ENCODE measurements at regions of chr15 and their contacts with region 1.

Region 1: GRCh38 chr15:60899322-60899966 is 329.7 kb downstream of the RORA start:
- DNase-seq: peak; percentile 76
- ATAC-seq: peak; percentile 79
- H3K4me3 ChIP-seq: no peak overlapping the region
- H3K27ac ChIP-seq: peak overlapping the region; percentile 60; the same call in 1 of the 2 replicates
- H3K4me1 ChIP-seq: peaks cover 45% of the 10 kb centered on the region
- H3K27me3 ChIP-seq: no peaks in the 10 kb centered on the region
- CTCF ChIP-seq: no peak
- EP300 ChIP-seq: peak; percentile 76 to 87; a peak in 3 of 4 replicates
- POLR2A ChIP-seq: no peak
- RAD21 ChIP-seq: no peak

Region 2: DNA sequence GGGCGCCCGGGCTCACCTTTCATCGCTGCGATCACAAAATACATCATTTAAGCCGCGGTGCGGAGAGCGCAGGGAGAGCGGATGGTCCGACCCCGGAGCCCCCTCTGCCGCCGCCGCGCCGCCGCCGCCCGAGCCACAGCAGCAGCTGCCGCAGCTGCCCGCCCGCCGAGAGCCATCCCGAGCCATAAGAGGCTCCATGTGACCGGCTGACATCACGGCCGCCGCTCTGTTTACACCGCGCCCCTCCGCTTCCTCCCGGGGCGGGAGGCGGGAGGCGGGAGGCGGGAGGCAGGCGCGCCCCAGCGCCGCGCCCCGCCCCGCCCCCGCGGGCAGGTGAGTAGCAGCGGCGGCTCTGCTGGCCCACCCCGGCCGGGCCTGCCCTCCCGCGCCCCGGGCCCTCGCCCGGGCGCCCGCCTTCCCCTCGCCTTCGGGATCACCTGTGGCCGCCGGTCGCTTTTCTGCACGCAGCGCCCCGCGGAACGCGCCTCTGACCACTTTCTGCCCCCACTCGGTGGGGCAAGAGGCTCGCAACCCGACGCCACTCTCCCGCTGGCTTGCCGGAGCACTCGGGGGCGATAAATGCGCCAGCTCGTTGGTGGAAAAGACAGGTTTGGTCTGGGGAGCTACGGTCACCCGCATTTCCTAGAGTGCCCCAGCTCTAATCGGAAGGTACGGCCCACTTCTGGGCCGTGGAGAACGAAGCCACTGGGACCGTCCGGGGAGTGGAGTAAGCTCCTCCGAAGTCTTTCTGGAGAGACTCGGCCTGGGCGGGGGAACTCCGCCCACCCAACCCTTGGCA is 306.9 kb before region 1 on chr15:
- CTCF ChIA-PET with region 1: interaction called, 82 read pairs
- POLR2A ChIA-PET with region 1: interaction called, 4 read pairs
- RAD21 ChIA-PET with region 1: interaction called, 6 read pairs
- SMC1A ChIA-PET with region 1: interaction called, 12 read pairs
- in situ Hi-C with region 1: no loop called
- intact Hi-C with region 1: loop called (anchors 5 kb)
- DNase-seq: no peak
- ATAC-seq: peak; percentile 74
- H3K4me3 ChIP-seq: peak overlapping the region; percentile 83
- H3K27ac ChIP-seq: no peak overlapping the region
- H3K4me1 ChIP-seq: no peaks in the 10 kb centered on the region
- H3K27me3 ChIP-seq: no peaks in the 10 kb centered on the region; a peak in 1 of 4 replicates
- CTCF ChIP-seq: peak; percentile 20 to 40 (median 35); a peak in 4 of 6 replicates
- EP300 ChIP-seq: no peak
- POLR2A ChIP-seq: peak; percentile 82
- RAD21 ChIP-seq: peak; percentile 19; the same call in 1 of the 2 replicates

Region 3: GRCh38 chr15:60649845-60650548 is 249.4 kb before region 1 on chr15:
- CTCF ChIA-PET with region 1: interaction called, 6 read pairs
- POLR2A ChIA-PET with region 1: no interaction called
- RAD21 ChIA-PET with region 1: interaction called, 4 read pairs
- SMC1A ChIA-PET with region 1: interaction called, 10 read pairs
- in situ Hi-C with region 1: no loop called
- intact Hi-C with region 1: loop called (anchors 2 kb)
- DNase-seq: peak; percentile 57
- ATAC-seq: peak; percentile 69
- H3K4me3 ChIP-seq: peak overlapping the region; percentile 55; the same call in 1 of the 2 replicates
- H3K27ac ChIP-seq: peak overlapping the region; percentile 84
- H3K4me1 ChIP-seq: peaks cover 42% of the 10 kb centered on the region
- H3K27me3 ChIP-seq: no peaks in the 10 kb centered on the region
- CTCF ChIP-seq: peak in 2 of 3 experiments; percentile 33 to 34; a peak in 4 of 6 replicates
- EP300 ChIP-seq: peak; percentile 77 to 89; a peak in 3 of 4 replicates
- POLR2A ChIP-seq: no peak
- RAD21 ChIP-seq: peak; percentile 77

Region 4: DNA sequence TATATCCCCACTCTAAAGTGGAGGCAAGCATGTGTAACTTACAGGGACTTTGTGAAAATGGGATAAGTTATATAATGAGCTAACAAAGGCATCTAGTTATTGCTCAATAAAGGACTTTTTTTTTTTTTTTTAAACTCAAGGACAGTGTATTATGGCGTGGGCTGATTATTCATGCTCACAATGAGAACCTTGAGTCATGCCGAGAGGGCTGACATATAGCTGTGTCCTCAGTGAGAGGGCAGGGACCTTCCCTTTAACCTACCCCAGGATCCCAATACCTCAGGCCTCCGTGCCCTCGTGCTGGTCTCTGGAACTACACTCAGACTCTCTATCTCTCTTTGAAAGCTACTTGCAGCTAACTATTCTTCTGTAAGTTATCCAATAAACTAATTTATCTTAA is 100.6 kb before region 1 on chr15:
- CTCF ChIA-PET with region 1: interaction called, 4 read pairs
- POLR2A ChIA-PET with region 1: interaction called, 6 read pairs
- RAD21 ChIA-PET with region 1: interaction called, 8 read pairs
- SMC1A ChIA-PET with region 1: interaction called, 6 read pairs
- in situ Hi-C with region 1: no loop called
- intact Hi-C with region 1: loop called (anchors 5 kb)
- DNase-seq: peak; percentile 19
- ATAC-seq: peak; percentile 76
- H3K4me3 ChIP-seq: no peak overlapping the region
- H3K27ac ChIP-seq: no peak overlapping the region
- H3K4me1 ChIP-seq: peaks cover 19% of the 10 kb centered on the region
- H3K27me3 ChIP-seq: no peaks in the 10 kb centered on the region
- CTCF ChIP-seq: no peak
- EP300 ChIP-seq: no peak
- POLR2A ChIP-seq: no peak
- RAD21 ChIP-seq: 0 out of 2 replicates have a peak, but pooled peaks have one; percentile 20

Region 5: GRCh38 chr15:60869851-60870250 is 29.6 kb before region 1 on chr15:
- CTCF ChIA-PET with region 1: interaction called, 4 read pairs
- POLR2A ChIA-PET with region 1: no interaction called
- RAD21 ChIA-PET with region 1: interaction called, 3 read pairs
- SMC1A ChIA-PET with region 1: interaction called, 10 read pairs
- in situ Hi-C with region 1: no loop called
- intact Hi-C with region 1: no loop called
- DNase-seq: no peak
- ATAC-seq: no peak
- H3K4me3 ChIP-seq: no peak overlapping the region
- H3K27ac ChIP-seq: no peak overlapping the region
- H3K4me1 ChIP-seq: no peaks in the 10 kb centered on the region
- H3K27me3 ChIP-seq: no peaks in the 10 kb centered on the region
- CTCF ChIP-seq: no peak
- EP300 ChIP-seq: no peak
- POLR2A ChIP-seq: no peak
- RAD21 ChIP-seq: no peak

Region 6: GRCh38 chr15:60973637-60974415 is 74.4 kb after region 1 on chr15:
- CTCF ChIA-PET with region 1: no interaction called
- POLR2A ChIA-PET with region 1: no interaction called
- RAD21 ChIA-PET with region 1: no interaction called
- SMC1A ChIA-PET with region 1: no interaction called
- in situ Hi-C with region 1: no loop called
- intact Hi-C with region 1: no loop called
- DNase-seq: no peak
- ATAC-seq: no peak
- H3K4me3 ChIP-seq: no peak overlapping the region
- H3K27ac ChIP-seq: no peak overlapping the region
- H3K4me1 ChIP-seq: no peaks in the 10 kb centered on the region
- H3K27me3 ChIP-seq: no peaks in the 10 kb centered on the region; a peak in 2 of 4 replicates
- CTCF ChIP-seq: no peak
- EP300 ChIP-seq: no peak
- POLR2A ChIP-seq: no peak
- RAD21 ChIP-seq: no peak